Right ventricle myocardium inferior (tissue), 1 donor: ENCODE measurements at regions of chr19 and their contacts with region 1.

Region 1: GRCh38 chr19:46288896-46289588 is 7.8 kb upstream of the HIF3A start:
- DNase-seq: no peak
- ATAC-seq: peak; percentile 79

Region 2: GRCh38 chr19:46251412-46251811 is 37.6 kb before region 1 on chr19:
- intact Hi-C with region 1: no loop called
- DNase-seq: no peak
- ATAC-seq: no peak

Region 3: DNA sequence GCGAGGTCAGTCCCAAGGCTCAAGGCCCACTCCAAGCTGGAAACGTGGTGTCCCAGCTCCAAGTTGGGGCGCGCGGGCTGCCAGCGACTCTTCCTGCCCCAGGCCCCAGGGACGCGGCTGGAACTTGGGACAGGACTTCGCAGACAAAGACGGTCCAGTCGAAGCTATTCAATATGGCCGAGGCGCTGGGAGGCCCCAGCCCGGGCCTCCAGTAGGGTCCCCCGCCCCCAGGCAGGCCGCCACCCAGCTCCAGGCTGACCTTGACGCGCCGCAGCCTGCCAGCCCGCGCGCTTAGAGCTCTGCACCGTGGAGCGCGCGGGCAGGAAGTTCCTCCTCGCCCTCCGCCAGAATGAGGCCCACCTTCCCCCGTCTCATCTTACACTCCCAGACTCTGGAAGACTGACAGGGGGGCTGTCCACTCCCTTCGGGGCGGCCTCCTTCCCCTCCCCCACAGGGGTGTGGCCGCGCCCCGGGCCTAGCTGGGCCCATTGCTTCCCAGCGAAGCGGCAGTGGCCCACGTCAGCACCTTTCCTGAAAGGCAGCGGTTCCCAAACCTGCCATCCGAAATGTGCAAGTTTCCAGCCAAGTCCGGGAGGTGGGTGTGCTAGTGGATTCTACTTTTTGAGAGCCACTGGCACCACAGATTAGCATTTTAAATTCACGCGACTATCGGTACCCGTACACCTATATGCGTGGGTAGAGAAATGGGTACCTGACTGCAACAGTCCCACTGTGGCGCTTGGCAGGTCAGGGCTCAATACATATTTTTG is 124.4 kb after region 1 on chr19 and contains the start of gene CCDC8:
- intact Hi-C with region 1: no loop called
- DNase-seq: peak; percentile 91
- ATAC-seq: peak; percentile 91
- total RNA-seq, gene CCDC8: 28.9 TPM

Region 4: DNA sequence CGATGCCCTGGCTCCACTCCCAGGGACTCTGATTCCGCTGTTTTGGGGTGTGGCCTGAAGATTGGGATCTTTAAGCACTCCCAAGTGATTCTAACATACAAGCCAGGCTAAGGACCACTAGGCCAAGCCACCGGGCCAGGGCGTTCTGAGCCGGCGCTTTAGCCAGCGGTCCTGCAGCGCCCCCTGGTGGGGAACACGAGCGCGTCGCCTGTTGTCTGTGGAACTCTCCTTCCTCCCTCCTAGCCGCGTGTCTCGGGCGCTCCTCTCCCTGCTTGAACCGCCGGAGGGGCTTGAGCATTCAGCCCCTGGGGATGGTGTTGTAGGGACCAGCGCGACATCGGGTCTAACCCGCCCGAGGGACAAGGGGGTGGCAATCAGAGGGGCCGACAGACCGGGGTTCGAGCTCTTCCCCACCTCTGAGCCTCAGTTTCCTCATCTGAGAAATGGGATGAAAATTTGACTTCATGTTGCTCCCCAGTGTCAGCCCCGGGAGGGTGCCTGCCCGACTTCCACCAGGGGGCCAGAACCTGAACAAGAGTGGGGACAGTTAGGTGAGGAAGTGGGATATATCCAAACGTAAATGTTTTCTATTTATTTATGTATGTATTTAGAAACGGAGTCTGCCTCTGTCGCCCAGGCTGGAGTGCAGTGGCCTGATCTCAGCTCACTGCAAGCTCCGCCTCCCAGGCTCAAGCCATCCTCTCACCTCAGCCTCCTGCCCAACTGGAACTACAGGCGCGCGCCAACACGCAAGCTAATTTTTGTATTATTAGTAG is 224.6 kb after region 1 on chr19:
- intact Hi-C with region 1: loop called (anchors 10 kb)
- DNase-seq: peak; percentile 84
- ATAC-seq: peak; percentile 92